B cell (primary cell): ENCODE measurements at regions of chr2 and their contacts with region 1.

Region 1: GRCh38 chr2:96638144-96639121 is at the start of gene KANSL3:
- DNase-seq: peak; percentile 96
- ATAC-seq: peak; percentile 89
- H3K4me3 ChIP-seq: peak within 1 kb of the TSS; percentile 81 to 96 (median 88)
- H3K4me3 Mint-ChIP-seq: peak within 1 kb of the TSS; percentile 98
- H3K27ac ChIP-seq: peak within 1 kb of the TSS; percentile 57 to 88
- H3K27ac Mint-ChIP-seq: peak within 1 kb of the TSS; percentile 96
- H3K4me1 ChIP-seq: peaks cover 20 to 24% of the 10 kb centered on the region in 2 donors
- H3K4me1 Mint-ChIP-seq: peaks cover 42% of the 10 kb centered on the region
- H3K27me3 ChIP-seq: no peaks in the 10 kb centered on the region
- H3K27me3 Mint-ChIP-seq: peaks cover 4% of the 10 kb centered on the region
- CTCF ChIP-seq: no peak
- total RNA-seq, gene KANSL3: 55.4 and 56.9 TPM in 2 replicates

Region 2: DNA sequence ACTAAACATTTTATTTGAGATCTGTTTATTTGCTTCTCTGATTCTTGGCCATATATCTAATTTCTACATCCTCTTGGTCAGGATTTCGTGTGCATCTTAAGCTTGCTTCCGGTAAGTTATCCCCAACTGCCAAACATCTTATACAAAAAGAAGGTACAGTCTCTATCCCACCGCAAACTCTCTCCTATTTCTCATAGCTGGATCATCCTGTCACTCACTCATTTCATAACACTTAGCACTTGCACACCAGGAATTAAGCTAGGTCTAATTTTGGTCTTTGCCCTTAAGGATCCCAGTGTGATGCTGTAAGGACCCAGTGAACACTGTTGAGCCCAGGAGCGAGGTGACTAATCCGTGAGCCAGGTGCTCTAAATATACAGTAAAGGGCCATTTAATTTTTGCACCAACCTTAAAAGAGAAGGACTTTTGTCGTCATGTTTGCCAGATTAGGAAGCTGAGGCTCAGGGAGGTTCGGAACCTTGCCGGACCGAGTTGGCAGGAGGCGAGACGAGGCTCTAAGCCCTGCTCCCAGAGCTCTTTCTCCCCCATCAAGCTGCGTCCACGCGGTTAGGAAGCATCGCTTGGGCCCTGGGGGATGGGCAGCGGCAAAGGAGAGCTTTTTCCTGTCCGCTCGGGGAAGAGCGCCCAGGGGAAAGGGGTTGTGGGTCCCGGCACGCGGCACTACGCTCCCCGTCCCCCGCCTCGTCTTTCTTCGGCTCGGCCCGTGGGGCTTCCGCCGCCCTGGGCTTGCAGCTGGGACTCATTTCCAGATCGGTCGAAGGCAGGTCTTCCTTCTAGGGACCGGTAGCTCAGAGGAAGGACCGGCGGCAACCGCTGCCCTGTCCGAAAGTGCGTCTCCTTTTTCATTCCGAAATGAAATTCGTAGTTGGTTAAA is 317.5 kb before region 1 on chr2:
- CTCF ChIA-PET with region 1: no interaction called
- POLR2A ChIA-PET with region 1: no interaction called
- intact Hi-C with region 1: loop called (anchors 10 kb)
- DNase-seq: no peak
- ATAC-seq: peak; percentile 9
- H3K4me3 ChIP-seq: peak overlapping the region; percentile 76 to 97 (median 79)
- H3K4me3 Mint-ChIP-seq: peak overlapping the region; percentile 87
- H3K27ac ChIP-seq: peak overlapping the region; percentile 34 to 68
- H3K27ac Mint-ChIP-seq: peak overlapping the region; percentile 84
- H3K4me1 ChIP-seq: peaks cover 33 to 43% of the 10 kb centered on the region in 2 donors
- H3K4me1 Mint-ChIP-seq: peaks cover 49% of the 10 kb centered on the region
- H3K27me3 ChIP-seq: no peaks in the 10 kb centered on the region
- H3K27me3 Mint-ChIP-seq: no peaks in the 10 kb centered on the region
- CTCF ChIP-seq: no peak

Region 3: GRCh38 chr2:96739633-96740428 is 101.4 kb after region 1 on chr2 and contains the start of gene LMAN2L:
- CTCF ChIA-PET with region 1: no interaction called
- POLR2A ChIA-PET with region 1: interaction called, 7 read pairs
- intact Hi-C with region 1: loop called (anchors 1 kb)
- DNase-seq: peak; percentile 97
- ATAC-seq: peak; percentile 98
- H3K4me3 ChIP-seq: peak within 1 kb of the TSS; percentile 67 to 93 (median 88)
- H3K4me3 Mint-ChIP-seq: peak within 1 kb of the TSS; percentile 97
- H3K27ac ChIP-seq: peak within 1 kb of the TSS; percentile 80 to 85
- H3K27ac Mint-ChIP-seq: peak within 1 kb of the TSS; percentile 97
- H3K4me1 ChIP-seq: peaks cover 14 to 25% of the 10 kb centered on the region in 2 donors
- H3K4me1 Mint-ChIP-seq: peaks cover 29% of the 10 kb centered on the region
- H3K27me3 ChIP-seq: no peaks in the 10 kb centered on the region
- H3K27me3 Mint-ChIP-seq: no peaks in the 10 kb centered on the region
- CTCF ChIP-seq: no peak
- total RNA-seq, gene LMAN2L: 10.7 TPM in 2 replicates

Region 4: DNA sequence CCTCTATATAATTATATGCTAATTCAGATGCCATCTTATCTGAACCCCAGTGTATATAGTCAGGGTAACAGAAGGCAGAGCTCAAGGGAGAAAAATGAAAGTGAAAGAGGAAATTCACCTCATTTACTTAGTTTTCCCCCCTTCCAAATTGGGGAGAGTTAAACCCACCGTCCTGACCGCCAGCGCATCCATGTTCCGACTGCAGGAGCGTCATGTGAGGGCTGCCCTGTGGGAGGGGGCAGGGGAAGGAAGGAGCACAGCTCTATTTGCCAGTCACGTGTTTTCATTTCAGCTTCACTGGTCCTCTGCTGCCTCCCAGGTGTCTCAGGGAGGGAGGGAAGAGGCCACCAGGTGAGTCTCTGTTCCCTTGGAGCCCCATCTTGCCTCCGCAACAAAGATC is 135.5 kb after region 1 on chr2:
- CTCF ChIA-PET with region 1: no interaction called
- POLR2A ChIA-PET with region 1: no interaction called
- intact Hi-C with region 1: no loop called
- DNase-seq: peak; percentile 75
- ATAC-seq: peak; percentile 70
- H3K4me3 ChIP-seq: peak overlapping the region; percentile 11 to 67 (median 58)
- H3K4me3 Mint-ChIP-seq: peak overlapping the region; percentile 94
- H3K27ac ChIP-seq: peak overlapping the region; percentile 56 to 78
- H3K27ac Mint-ChIP-seq: peak overlapping the region; percentile 93
- H3K4me1 ChIP-seq: peaks cover 23 to 47% of the 10 kb centered on the region in 2 donors
- H3K4me1 Mint-ChIP-seq: peaks cover 44% of the 10 kb centered on the region
- H3K27me3 ChIP-seq: no peaks in the 10 kb centered on the region
- H3K27me3 Mint-ChIP-seq: no peaks in the 10 kb centered on the region
- CTCF ChIP-seq: no peak

Region 5: DNA sequence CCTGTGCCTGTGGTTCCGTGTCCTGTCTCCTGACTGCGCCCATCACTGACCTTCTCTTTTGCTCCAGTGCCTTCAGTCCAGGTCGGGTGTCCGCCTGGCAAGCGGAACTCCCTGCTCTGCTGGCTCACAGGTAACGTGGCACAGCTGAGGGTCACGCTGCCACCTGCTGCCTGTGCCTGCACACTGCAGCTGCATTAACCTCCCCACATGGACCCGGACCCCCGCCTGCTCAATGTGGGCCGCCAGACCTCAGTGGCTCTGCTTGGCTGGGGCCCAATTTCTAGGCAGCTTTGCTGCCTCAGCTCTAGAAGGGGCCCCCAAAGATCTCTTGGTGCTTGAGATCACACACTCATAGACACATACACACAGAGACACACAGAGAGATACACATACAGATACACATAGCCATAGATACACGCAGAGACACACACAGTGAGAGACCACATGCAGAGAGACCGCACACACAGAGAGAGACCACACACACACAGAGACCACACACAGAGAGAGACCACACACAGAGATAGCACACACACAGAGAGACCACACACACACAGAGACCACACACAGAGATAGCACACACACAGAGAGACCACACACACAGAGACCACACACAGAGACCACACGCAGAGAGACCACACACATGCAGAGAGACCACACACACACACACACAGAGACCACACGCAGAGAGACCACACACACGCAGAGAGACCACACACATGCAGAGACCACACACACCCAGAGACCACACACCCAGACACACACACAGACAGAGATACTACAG is 162.8 kb after region 1 on chr2:
- CTCF ChIA-PET with region 1: interaction called, 9 read pairs
- POLR2A ChIA-PET with region 1: no interaction called
- intact Hi-C with region 1: loop called (anchors 5 kb)
- DNase-seq: peak; percentile 80
- ATAC-seq: peak; percentile 98
- H3K4me3 ChIP-seq: no peak overlapping the region
- H3K4me3 Mint-ChIP-seq: no peak overlapping the region
- H3K27ac ChIP-seq: no peak overlapping the region
- H3K27ac Mint-ChIP-seq: no peak overlapping the region
- H3K4me1 ChIP-seq: peaks cover 25 to 30% of the 10 kb centered on the region in 2 donors
- H3K4me1 Mint-ChIP-seq: peaks cover 4% of the 10 kb centered on the region
- H3K27me3 ChIP-seq: no peaks in the 10 kb centered on the region
- H3K27me3 Mint-ChIP-seq: no peaks in the 10 kb centered on the region
- CTCF ChIP-seq: peak; percentile 94

Region 6: GRCh38 chr2:97011977-97012565 is 373.6 kb after region 1 on chr2:
- CTCF ChIA-PET with region 1: no interaction called
- POLR2A ChIA-PET with region 1: no interaction called
- intact Hi-C with region 1: no loop called
- DNase-seq: peak; percentile 78
- ATAC-seq: no peak
- H3K4me3 ChIP-seq: no peak overlapping the region
- H3K4me3 Mint-ChIP-seq: no peak overlapping the region
- H3K27ac ChIP-seq: no peak overlapping the region
- H3K27ac Mint-ChIP-seq: no peak overlapping the region
- H3K4me1 ChIP-seq: no peaks in the 10 kb centered on the region
- H3K4me1 Mint-ChIP-seq: no peaks in the 10 kb centered on the region
- H3K27me3 ChIP-seq: peaks cover 0 to 4% (median 0%) of the 10 kb centered on the region in 4 experiments
- H3K27me3 Mint-ChIP-seq: peaks cover 32% of the 10 kb centered on the region
- CTCF ChIP-seq: peak; percentile 73